Left colon (tissue), 2 donors: ENCODE measurements at regions of chr2 and their contacts with region 1.

Region 1: DNA sequence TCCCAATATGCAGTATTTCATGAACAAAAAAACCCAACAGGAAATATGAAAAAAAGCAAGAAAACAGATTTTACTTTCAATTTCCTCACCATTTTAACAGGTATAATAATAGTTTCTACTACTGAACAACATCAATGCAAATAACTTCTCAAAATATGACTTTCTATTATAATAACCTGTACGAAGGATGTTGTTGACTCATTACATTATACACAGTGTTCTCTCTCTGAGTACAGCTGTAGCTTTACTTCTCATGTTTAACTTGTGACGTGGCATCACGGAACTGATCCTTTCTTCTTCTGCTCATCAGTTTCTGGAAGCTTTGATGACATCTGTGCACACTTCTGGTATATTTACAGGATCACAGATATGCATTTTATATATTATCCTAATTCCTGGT is 40.0 kb downstream of the FAM228A start:
- DNase-seq: no peak
- ATAC-seq: no peak

Region 2: GRCh38 chr2:24382363-24383073 is 167.6 kb after region 1 on chr2:
- intact Hi-C with region 1: loop called in 1 of 2 experiments (anchors 10 kb)
- DNase-seq: peak in 1 of 2 donors; percentile 44
- ATAC-seq: peak; percentile 89